Heart left ventricle (tissue), 16 donors: ENCODE measurements at regions of chr5 and their contacts with region 1.

Region 1: DNA sequence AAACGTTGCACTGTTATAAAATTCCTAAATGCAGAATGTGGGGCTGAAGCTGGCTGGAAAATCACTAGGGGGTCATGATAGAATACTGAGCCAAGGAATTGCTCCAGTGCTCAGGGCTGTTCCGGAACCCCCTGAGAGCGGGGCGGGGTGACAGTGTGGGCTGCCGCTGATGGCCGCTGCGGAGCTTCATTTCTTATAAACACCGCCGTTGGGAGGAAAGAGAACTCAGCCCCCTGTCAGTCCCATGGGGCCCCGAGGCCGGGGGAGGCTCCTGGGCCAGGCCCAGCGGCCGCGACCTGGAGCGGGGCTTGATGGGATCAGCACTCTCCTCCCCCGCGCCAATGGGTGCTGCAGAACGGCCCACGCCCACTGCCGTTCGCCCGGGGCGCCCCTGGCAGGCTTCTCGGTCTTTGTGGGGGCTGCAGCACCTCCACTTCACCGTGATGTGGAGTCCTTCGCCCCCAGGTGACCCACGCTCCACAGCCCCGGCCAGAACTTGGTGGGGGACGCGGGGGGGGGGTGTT is 5.2 kb upstream of the IRF1 start:
- DNase-seq: peak; percentile 93 to 96 (median 95)
- ATAC-seq: peak; percentile 69 to 80 (median 76)
- H3K4me3 ChIP-seq: peak overlapping the region; percentile 27 to 88 (median 68)
- H3K27ac ChIP-seq: peak overlapping the region; percentile 79 to 99 (median 93)
- H3K4me1 ChIP-seq: peaks cover 4 to 92% (median 44%) of the 10 kb centered on the region in 12 donors
- H3K27me3 ChIP-seq: no peaks in the 10 kb centered on the region
- CTCF ChIP-seq: peak in 5 of 12 donors; percentile 9 to 38 (median 24)
- POLR2A ChIP-seq: peak in 1 of 2 donors; percentile 52

Region 2: DNA sequence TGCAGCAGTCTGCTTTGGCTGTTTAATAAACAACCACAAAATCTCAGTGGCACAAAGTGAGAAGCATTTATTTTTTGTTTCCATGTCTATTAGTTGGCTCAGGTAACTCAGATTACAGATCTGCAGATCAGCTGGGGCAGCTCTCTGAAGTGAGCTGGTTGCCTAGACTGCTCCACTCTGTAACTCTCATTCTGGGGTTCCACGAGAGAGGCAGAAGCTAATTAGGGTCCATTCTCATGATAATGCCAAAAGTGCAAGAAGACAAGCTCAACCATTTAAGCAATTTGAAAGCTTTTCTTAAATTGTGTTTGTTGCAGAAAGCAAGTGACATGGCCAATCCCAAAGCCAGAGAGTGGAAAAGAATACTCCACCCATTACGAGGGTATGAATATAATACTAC is 563.5 kb before region 1 on chr5:
- intact Hi-C with region 1: no loop called
- DNase-seq: no peak
- ATAC-seq: no peak
- H3K4me3 ChIP-seq: no peak overlapping the region
- H3K27ac ChIP-seq: no peak overlapping the region
- H3K4me1 ChIP-seq: no peaks in the 10 kb centered on the region
- H3K27me3 ChIP-seq: no peaks in the 10 kb centered on the region
- CTCF ChIP-seq: no peak
- POLR2A ChIP-seq: no peak

Region 3: GRCh38 chr5:132410451-132411381 is 85.0 kb before region 1 on chr5:
- intact Hi-C with region 1: loop called in 3 of 10 experiments (anchors 2 to 5 kb)
- DNase-seq: peak; percentile 85 to 92 (median 90)
- ATAC-seq: peak; percentile 71 to 87 (median 78)
- H3K4me3 ChIP-seq: peak overlapping the region; percentile 67 to 85 (median 79)
- H3K27ac ChIP-seq: peak overlapping the region; percentile 97 to 99 (median 98)
- H3K4me1 ChIP-seq: peaks cover 7 to 69% (median 57%) of the 10 kb centered on the region in 12 donors
- H3K27me3 ChIP-seq: no peaks in the 10 kb centered on the region
- CTCF ChIP-seq: peak; percentile 47 to 79 (median 68)
- POLR2A ChIP-seq: peak in 1 of 2 donors; percentile 71

Region 4: GRCh38 chr5:132419502-132420468 is 75.9 kb before region 1 on chr5:
- intact Hi-C with region 1: loop called in 9 of 10 experiments (anchors 1 to 5 kb)
- DNase-seq: peak; percentile 74 to 80 (median 77)
- ATAC-seq: peak; percentile 49 to 73 (median 64)
- H3K4me3 ChIP-seq: peak overlapping the region in 2 of 12 donors; percentile 17 to 18
- H3K27ac ChIP-seq: peak overlapping the region; percentile 40 to 99 (median 82)
- H3K4me1 ChIP-seq: peaks cover 15 to 100% (median 91%) of the 10 kb centered on the region in 12 donors
- H3K27me3 ChIP-seq: no peaks in the 10 kb centered on the region
- CTCF ChIP-seq: peak; percentile 82 to 93 (median 90)
- POLR2A ChIP-seq: no peak

Region 5: DNA sequence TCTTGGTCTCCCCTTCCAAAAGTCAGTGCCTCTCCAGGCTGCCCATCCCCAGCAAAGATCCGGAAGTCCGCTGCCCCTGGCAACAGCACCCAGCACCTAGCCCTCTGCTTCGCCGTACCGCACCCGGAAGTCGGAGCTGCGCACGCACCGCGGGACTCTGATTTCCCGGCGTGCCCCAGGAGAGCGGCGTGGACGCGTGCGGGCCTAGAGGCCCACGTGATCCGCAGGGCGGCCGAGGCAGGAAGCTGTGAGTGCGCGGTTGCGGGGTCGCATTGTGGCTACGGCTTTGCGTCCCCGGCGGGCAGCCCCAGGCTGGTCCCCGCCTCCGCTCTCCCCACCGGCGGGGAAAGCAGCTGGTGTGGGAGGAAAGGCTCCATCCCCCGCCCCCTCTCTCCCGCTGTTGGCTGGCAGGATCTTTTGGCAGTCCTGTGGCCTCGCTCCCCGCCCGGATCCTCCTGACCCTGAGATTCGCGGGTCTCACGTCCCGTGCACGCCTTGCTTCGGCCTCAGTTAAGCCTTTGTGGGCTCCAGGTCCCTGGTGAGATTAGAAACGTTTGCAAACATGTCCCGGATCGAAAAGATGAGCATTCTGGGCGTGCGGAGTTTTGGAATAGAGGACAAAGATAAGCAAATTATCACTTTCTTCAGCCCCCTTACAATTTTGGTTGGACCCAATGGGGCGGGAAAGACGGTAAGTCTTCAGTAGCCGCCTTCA is 61.2 kb after region 1 on chr5 and contains the start of gene RAD50:
- intact Hi-C with region 1: loop called in 1 of 10 experiments (anchors 5 kb)
- DNase-seq: peak; percentile 89 to 97 (median 95)
- ATAC-seq: peak; percentile 97 to 99 (median 98)
- H3K4me3 ChIP-seq: peak within 1 kb of the TSS; percentile 54 to 93 (median 70)
- H3K27ac ChIP-seq: peak within 1 kb of the TSS; percentile 35 to 91 (median 86)
- H3K4me1 ChIP-seq: peaks cover 0 to 26% (median 12%) of the 10 kb centered on the region in 12 donors
- H3K27me3 ChIP-seq: no peaks in the 10 kb centered on the region
- CTCF ChIP-seq: no peak
- POLR2A ChIP-seq: peak in 1 of 2 donors; percentile 73
- total RNA-seq, gene RAD50: 17.5 to 41.8 (median 32.4) TPM

Region 6: DNA sequence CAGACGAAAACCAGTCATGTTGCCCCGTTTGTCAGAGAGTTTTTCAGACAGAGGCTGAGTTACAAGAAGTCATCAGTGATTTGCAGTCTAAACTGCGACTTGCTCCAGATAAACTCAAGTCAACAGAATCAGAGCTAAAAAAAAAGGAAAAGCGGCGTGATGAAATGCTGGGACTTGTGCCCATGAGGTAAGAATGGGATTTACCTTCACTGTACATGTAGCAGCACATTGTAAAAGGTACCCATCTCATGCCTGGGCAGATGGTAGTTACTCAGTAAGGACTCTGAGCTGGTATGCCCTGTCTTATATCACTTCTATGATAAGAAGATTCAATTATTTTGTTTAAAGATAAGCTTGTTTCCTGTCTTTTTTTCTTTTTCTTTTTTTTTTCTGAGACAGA is 99.9 kb after region 1 on chr5:
- intact Hi-C with region 1: no loop called
- DNase-seq: no peak
- ATAC-seq: no peak
- H3K4me3 ChIP-seq: no peak overlapping the region
- H3K27ac ChIP-seq: no peak overlapping the region
- H3K4me1 ChIP-seq: no peaks in the 10 kb centered on the region
- H3K27me3 ChIP-seq: no peaks in the 10 kb centered on the region
- CTCF ChIP-seq: no peak
- POLR2A ChIP-seq: no peak